Activated CD8-positive, alpha-beta memory T cell treated with anti-CD3 and anti-CD28 coated beads, Interleukin-2, amount 10 ng/mL, durations not matched to agents 7 days and 5 days (primary cell): ENCODE measurements at regions of chr16 and their contacts with region 1.

Region 1: DNA sequence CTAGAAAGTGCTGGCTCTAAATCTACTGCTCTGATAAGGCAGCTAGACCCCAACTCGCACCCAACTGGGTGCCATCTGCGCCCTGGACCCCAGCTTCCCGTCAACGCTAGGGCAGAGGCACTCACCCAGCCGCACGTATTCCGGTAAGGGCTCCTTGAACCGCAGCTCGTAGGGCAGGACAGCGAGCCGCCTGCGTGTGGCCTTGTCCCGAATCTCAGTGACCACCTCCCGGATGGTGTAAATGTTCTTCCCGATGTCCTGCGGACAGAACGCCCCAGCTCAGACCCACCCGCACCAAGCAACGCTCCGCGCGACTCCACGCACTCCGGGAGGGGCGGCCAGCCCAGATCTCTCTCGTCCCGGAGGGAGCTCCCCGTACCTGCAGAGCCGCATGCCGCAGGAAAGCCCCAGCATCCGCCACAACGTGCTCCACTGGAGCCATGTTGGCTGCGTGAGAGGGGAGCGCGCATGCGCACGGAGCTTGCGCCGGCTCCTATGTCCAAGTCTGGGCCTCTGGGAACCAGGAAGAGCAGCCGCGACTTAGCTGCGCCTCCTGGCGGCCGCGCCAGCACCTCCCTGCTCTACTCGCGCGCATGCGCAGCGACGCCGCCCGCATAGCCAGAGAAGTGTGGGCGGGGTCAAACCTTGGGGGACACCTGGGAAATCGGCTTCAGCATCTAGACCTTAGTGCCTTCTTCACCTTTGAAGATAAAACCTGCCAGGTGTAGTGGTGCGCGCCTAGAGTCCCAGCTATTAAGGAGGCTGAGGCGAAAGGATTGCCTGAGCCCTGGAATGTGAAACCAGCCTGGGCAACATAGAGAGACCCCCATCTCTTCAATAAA is at the start of gene NOB1:
- DNase-seq: peak; percentile 98
- ATAC-seq: peak; percentile 96
- H3K4me3 Mint-ChIP-seq: peak within 1 kb of the TSS; percentile 100
- H3K27ac Mint-ChIP-seq: peak within 1 kb of the TSS; percentile 97
- H3K4me1 Mint-ChIP-seq: peaks cover 31% of the 10 kb centered on the region
- H3K27me3 Mint-ChIP-seq: no peaks in the 10 kb centered on the region
- total RNA-seq, gene NOB1: 61.4 to 84.2 TPM

Region 2: DNA sequence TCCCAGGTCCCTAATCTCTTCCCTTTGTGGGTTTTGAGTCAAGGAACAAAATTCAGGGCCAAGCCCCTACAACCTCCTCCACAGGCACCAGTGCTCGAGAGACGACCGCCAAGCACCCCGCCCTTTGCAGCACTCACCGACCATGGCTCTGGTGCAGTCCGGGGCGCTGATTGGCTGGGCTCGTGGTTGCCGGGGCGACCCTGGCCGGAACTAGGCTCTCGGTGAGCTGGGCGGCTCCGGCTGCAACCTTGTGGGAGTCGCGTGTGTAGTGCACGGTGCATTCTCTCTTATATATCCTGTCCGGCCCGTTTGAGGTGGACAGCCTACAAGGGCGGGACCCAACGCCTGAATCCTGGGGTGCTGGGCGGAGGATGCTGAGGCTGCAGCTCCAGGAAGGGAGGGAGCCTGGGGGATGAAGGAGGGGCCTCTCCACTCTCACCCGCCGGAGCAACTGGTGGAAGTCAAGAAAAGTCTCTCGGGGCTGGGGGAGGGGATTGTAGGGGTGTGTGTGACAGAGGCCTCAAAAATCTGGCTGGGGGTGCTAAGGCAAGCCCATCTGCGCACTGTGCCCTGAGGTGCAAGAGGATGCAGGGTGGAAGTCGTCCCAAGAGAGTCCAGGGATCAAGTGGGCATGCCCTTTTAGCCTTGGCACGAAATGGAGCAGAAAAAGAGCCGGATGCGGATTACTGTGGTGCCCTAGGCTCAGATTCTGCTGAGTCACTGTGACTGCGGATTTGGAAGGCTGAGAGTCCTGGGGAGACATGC is 28.2 kb before region 1 on chr16 and contains the start of gene NQO1:
- CTCF ChIA-PET with region 1: interaction called, 84 read pairs
- DNase-seq: peak; percentile 97
- ATAC-seq: peak; percentile 99
- H3K4me3 Mint-ChIP-seq: peak within 1 kb of the TSS; percentile 86
- H3K27ac Mint-ChIP-seq: peak within 1 kb of the TSS; percentile 93
- H3K4me1 Mint-ChIP-seq: peaks cover 54% of the 10 kb centered on the region
- H3K27me3 Mint-ChIP-seq: no peaks in the 10 kb centered on the region
- total RNA-seq, gene NQO1: 22.6 to 27.2 TPM

Region 3: DNA sequence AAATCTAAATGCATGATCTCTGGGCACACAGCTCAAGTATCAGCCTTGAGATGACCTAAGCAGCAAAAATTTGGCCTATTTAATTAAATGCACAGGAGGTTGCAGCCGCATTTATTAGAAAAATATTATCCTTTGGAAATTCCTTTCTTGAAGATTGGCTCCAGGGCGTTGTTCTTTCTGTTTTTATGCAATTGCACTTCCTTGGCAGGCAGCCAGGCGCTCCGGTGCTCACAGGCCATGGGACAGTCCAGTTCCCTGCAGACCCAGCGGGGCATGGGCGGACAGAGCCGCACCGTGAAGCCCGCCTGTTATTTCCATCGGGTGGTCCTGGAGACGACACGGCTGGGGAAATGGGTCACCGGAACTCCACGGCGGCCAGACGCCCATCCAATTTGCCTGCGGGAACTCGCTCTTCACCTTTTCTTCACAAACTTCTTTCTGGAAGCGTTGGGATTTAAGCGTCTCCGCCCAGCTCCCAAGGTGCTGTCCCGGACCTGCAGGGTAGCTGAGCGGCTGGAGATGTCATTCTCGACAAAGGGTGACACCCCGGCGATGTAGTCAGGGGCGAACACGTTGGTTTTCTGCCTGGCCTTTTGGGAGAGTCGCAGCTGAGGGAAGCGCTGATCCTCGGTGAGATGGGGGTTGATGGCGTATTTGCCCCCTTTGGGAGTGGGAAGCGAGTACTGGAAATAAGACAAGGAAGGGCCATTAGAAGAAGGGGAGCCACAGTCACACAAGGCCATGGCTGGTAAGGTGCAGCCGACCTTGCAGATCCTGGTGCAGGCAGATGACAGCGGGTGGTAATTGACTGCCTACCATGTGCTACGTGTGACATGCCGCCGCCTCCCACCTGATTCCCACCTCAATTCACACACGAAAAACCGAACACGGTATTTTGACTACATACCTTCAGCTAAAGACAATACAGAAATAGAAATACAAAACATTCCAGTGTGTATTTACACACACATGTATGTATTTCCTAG is 12.5 kb before region 1 on chr16:
- CTCF ChIA-PET with region 1: interaction called, 20 read pairs
- DNase-seq: no peak
- ATAC-seq: no peak
- H3K4me3 Mint-ChIP-seq: no peak overlapping the region
- H3K27ac Mint-ChIP-seq: no peak overlapping the region
- H3K4me1 Mint-ChIP-seq: no peaks in the 10 kb centered on the region
- H3K27me3 Mint-ChIP-seq: no peaks in the 10 kb centered on the region

Region 4: GRCh38 chr16:69833357-69834282 is 78.9 kb after region 1 on chr16:
- CTCF ChIA-PET with region 1: no interaction called
- DNase-seq: no peak
- ATAC-seq: no peak
- H3K4me3 Mint-ChIP-seq: no peak overlapping the region
- H3K27ac Mint-ChIP-seq: no peak overlapping the region
- H3K4me1 Mint-ChIP-seq: peaks cover 5% of the 10 kb centered on the region
- H3K27me3 Mint-ChIP-seq: no peaks in the 10 kb centered on the region